ENCODE measurements at regions of chr2 and their contacts with region 1.

Region 1: GRCh38 chr2:71545572-71546274 is 92.4 kb downstream of the DYSF start:
- DNase-seq: peak; percentile 63
- H3K4me3 ChIP-seq: peak overlapping the region; percentile 16
- H3K27ac ChIP-seq: no peak overlapping the region
- H3K4me1 ChIP-seq: peaks cover 4% of the 10 kb centered on the region
- H3K27me3 ChIP-seq: no peaks in the 10 kb centered on the region
- CTCF ChIP-seq: peak; percentile 54

Region 2: DNA sequence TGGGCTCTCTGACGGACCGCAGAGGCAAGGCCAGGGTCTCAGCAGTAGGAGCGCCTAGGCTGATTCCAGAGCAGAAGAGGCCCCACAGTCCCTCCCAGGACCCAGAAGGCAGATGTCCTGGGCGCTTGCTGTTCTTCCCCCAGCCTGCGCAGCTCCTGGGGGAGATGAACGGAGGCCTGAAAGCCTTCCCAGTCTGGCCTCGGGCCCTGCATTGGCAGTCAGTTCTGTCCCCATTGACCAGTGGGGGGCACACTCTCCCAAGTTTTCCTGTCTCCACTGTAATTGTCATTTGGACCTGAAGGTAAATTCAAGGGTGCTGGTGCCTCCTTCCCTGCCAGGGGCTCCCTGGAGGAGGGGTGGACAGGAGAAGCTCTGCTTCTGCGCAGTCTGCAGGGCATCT is 256.2 kb after region 1 on chr2:
- intact Hi-C with region 1: loop called (anchors 2 kb)
- DNase-seq: peak; percentile 65
- H3K4me3 ChIP-seq: no peak overlapping the region
- H3K27ac ChIP-seq: no peak overlapping the region
- H3K4me1 ChIP-seq: no peaks in the 10 kb centered on the region
- H3K27me3 ChIP-seq: no peaks in the 10 kb centered on the region
- CTCF ChIP-seq: peak; percentile 29

Region 3: DNA sequence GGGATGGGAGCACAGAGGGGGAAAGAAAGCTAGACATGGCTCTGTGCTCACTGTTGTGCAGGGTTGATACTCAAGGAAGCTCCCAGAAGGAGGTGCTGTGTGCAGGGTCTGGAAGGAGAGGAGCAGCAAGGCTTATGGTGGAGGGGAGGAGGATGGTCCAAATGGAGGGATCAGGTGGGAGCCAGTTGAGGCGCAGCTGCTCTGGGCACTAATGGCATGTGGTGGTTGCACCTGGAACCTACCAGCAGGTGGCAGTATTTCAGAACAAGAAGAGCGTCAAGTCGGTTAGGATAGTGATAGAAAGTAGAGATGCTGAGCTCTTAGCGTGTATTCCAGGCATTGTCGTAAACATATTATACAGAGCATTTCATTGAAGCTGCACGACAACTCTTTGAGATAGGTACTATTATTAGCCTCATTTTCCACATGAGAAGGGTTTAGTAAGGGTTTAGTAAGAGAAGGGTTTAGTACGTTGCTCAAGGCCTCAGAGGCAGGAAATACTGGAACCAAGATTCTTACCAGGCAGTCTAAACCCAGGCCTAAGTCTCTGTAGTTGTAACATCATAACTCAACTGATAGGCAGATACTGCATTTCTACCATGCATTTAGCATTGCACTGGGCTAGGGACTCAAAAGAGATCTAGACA is 378.3 kb after region 1 on chr2:
- intact Hi-C with region 1: loop called (anchors 5 kb)
- DNase-seq: peak; percentile 76
- H3K4me3 ChIP-seq: no peak overlapping the region
- H3K27ac ChIP-seq: no peak overlapping the region
- H3K4me1 ChIP-seq: no peaks in the 10 kb centered on the region
- H3K27me3 ChIP-seq: no peaks in the 10 kb centered on the region
- CTCF ChIP-seq: peak; percentile 86

Region 4: DNA sequence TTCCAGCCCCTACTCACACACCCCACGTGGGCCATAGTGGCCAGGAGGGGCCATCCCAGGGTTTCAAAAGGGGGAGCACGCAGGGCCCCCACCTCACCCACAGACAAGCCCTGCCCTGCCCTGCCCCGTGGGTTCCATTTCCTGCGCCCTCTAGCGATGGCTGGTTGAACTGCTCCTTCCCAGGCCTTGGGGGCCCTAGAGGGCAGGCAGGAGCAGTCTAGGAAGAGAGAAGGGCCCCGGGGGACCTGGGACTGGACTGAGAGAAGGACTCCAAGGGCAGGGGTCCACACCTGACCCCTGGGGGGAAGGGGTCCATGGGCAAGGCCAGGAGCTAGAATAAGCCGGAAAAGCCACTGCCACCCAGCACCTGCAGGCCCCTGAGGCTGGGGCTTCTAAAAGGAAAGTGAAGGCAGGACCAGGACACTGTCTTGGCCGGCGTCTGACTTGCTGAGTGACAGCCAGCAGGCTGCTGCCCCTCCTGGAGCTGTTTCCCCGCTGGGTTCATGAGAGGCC is 591.8 kb after region 1 on chr2:
- intact Hi-C with region 1: loop called (anchors 5 kb)
- DNase-seq: peak; percentile 82
- H3K4me3 ChIP-seq: no peak overlapping the region
- H3K27ac ChIP-seq: no peak overlapping the region
- H3K4me1 ChIP-seq: no peaks in the 10 kb centered on the region
- H3K27me3 ChIP-seq: no peaks in the 10 kb centered on the region
- CTCF ChIP-seq: peak; percentile 92

Region 5: GRCh38 chr2:72150157-72150865 is 604.6 kb after region 1 on chr2:
- intact Hi-C with region 1: loop called (anchors 5 kb)
- DNase-seq: peak; percentile 92
- H3K4me3 ChIP-seq: peak overlapping the region; percentile 37
- H3K27ac ChIP-seq: no peak overlapping the region
- H3K4me1 ChIP-seq: peaks cover 24% of the 10 kb centered on the region
- H3K27me3 ChIP-seq: peaks cover 40% of the 10 kb centered on the region
- CTCF ChIP-seq: peak; percentile 75

Region 6: GRCh38 chr2:72325592-72326422 is 780.1 kb after region 1 on chr2:
- intact Hi-C with region 1: loop called (anchors 10 kb)
- DNase-seq: peak; percentile 67
- H3K4me3 ChIP-seq: no peak overlapping the region
- H3K27ac ChIP-seq: no peak overlapping the region
- H3K4me1 ChIP-seq: no peaks in the 10 kb centered on the region
- H3K27me3 ChIP-seq: no peaks in the 10 kb centered on the region
- CTCF ChIP-seq: peak; percentile 63

Measured in colonic mucosa (tissue), 4 donors.